Stomach (tissue), 19 donors: ENCODE measurements at regions of chr20 and their contacts with region 1.

Region 1: GRCh38 chr20:35739294-35740163 is 2.5 kb downstream of the RBM39 start:
- DNase-seq: peak in 1 of 2 donors; percentile 28
- H3K4me3 ChIP-seq: peak overlapping the region; percentile 62 to 80 (median 70)
- H3K27ac ChIP-seq: peak overlapping the region in 4 of 5 donors; percentile 97 to 100 (median 99)
- H3K4me1 ChIP-seq: peaks cover 53 to 76% (median 68%) of the 10 kb centered on the region in 4 donors
- H3K27me3 ChIP-seq: no peaks in the 10 kb centered on the region
- CTCF ChIP-seq: no peak
- EP300 ChIP-seq: no peak
- POLR2A ChIP-seq: no peak

Region 2: DNA sequence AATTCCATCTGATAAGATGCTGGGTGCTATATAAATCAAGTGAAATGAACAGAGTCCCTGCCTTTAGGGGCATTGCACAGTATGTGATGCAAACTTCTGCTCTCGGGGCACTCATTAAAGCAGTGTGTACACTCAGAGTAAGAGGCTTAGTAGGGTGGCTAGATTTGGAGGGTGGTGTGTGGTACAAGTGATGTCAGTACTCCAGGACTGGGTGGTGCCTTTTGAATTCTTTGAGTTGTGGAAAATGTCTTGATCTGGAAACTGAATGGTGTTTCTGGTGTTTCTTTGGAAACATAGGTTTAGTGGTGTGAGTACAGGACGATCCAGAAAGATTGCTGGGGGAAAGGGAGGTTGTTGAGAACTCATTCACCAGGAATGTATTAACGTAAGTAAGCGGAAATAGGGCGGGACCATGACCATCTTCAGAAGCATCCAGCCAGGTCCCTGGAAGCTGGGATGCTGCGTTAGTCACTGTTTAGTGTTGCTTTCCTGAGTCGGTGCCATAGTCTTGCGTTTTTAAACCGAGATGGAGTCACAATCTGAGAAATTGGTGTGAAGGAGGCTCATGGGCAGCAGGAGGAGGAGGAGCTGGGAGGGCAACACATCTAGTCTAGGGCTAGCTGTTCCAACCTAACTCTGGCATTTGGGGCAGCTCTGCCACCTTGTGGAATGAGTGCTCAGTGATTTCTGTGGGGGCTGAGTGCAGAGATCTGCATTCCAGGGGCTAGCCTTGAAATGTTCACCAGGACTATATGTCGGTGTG is 144.4 kb after region 1 on chr20:
- intact Hi-C with region 1: loop called (anchors 10 kb)
- DNase-seq: peak; percentile 69 to 89
- H3K4me3 ChIP-seq: no peak overlapping the region
- H3K27ac ChIP-seq: peak overlapping the region; percentile 21 to 86 (median 85)
- H3K4me1 ChIP-seq: peaks cover 0 to 22% (median 5%) of the 10 kb centered on the region in 4 donors
- H3K27me3 ChIP-seq: no peaks in the 10 kb centered on the region
- CTCF ChIP-seq: peak in 5 of 7 experiments; percentile 62 to 73 (median 64)
- EP300 ChIP-seq: peak; percentile 69
- POLR2A ChIP-seq: no peak